ENCODE measurements at regions of chr2 and their contacts with region 1.

Region 1: GRCh38 chr2:27356382-27357181 is at the start of gene GTF3C2:
- DNase-seq: peak; percentile 98
- ATAC-seq: peak; percentile 82
- H3K4me3 ChIP-seq: peak within 1 kb of the TSS; percentile 64 to 90 (median 82)
- H3K4me3 Mint-ChIP-seq: peak within 1 kb of the TSS; percentile 97
- H3K27ac ChIP-seq: peak within 1 kb of the TSS; percentile 86 to 88
- H3K27ac Mint-ChIP-seq: peak within 1 kb of the TSS; percentile 99
- H3K4me1 ChIP-seq: peaks cover 18 to 25% of the 10 kb centered on the region in 2 donors
- H3K4me1 Mint-ChIP-seq: peaks cover 48% of the 10 kb centered on the region
- H3K27me3 ChIP-seq: no peaks in the 10 kb centered on the region
- H3K27me3 Mint-ChIP-seq: no peaks in the 10 kb centered on the region
- CTCF ChIP-seq: no peak
- total RNA-seq, gene GTF3C2: 114 and 121 TPM in 2 replicates

Region 2: DNA sequence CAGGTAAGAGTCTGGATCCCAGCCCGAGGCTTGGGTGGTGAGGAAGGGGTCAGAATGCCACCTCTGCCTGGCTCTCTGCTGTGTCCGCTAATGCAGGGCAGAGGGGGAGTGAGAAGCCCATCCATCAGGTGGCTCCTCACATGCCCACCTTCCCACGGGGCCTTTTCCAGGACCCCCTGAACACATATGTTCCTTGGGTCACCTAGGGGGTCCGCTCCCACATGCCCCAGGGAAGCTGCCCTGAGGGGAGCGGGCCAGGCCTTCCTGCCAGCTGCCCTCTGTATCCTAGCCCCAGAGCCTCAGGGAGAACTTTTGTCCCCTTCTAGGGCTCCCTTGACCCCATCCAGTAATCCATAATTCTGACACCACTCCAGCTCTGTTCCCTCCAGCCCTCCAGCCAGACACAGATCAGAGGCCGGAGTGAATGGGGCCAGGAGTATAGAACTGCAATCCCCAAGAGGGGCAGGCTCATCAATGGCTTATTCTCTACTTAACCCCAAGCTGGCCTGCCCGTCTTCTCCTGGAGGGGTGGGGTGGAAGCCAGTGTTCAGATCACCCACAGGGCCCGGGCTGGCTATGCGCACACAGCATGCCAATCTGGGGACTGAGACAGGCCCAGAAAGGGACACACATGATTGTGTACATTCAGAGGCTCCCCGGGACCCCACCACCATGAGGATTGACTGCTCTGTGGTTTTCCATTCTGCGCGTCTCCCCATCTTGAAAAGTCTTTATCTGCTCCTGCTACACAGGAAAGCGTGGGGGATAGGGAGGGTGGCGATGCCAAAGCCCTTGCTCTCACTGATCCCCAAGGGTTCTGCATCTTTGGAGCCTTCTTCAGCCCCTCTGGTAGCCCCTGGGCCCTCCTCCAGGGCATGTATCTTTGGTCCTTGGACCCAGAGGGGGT is 277.1 kb before region 1 on chr2:
- CTCF ChIA-PET with region 1: no interaction called
- POLR2A ChIA-PET with region 1: no interaction called
- intact Hi-C with region 1: loop called (anchors 1 kb)
- DNase-seq: no peak
- ATAC-seq: no peak
- H3K4me3 ChIP-seq: no peak overlapping the region
- H3K4me3 Mint-ChIP-seq: no peak overlapping the region
- H3K27ac ChIP-seq: no peak overlapping the region
- H3K27ac Mint-ChIP-seq: no peak overlapping the region
- H3K4me1 ChIP-seq: peaks cover 27 to 37% of the 10 kb centered on the region in 2 donors
- H3K4me1 Mint-ChIP-seq: peaks cover 37% of the 10 kb centered on the region
- H3K27me3 ChIP-seq: peaks cover 0 to 11% (median 4%) of the 10 kb centered on the region in 4 experiments
- H3K27me3 Mint-ChIP-seq: no peaks in the 10 kb centered on the region
- CTCF ChIP-seq: no peak

Region 3: GRCh38 chr2:27217217-27218121 is 139.1 kb before region 1 on chr2 and contains the start of gene CAD:
- CTCF ChIA-PET with region 1: no interaction called
- POLR2A ChIA-PET with region 1: interaction called, 4 read pairs
- intact Hi-C with region 1: loop called (anchors 1 kb)
- DNase-seq: peak; percentile 89
- ATAC-seq: peak; percentile 86
- H3K4me3 ChIP-seq: peak within 1 kb of the TSS; percentile 11 to 85 (median 79)
- H3K4me3 Mint-ChIP-seq: peak within 1 kb of the TSS; percentile 98
- H3K27ac ChIP-seq: peak within 1 kb of the TSS; percentile 70 to 74
- H3K27ac Mint-ChIP-seq: peak within 1 kb of the TSS; percentile 87
- H3K4me1 ChIP-seq: peaks cover 28 to 33% of the 10 kb centered on the region in 2 donors
- H3K4me1 Mint-ChIP-seq: peaks cover 44% of the 10 kb centered on the region
- H3K27me3 ChIP-seq: no peaks in the 10 kb centered on the region
- H3K27me3 Mint-ChIP-seq: no peaks in the 10 kb centered on the region
- CTCF ChIP-seq: no peak
- total RNA-seq, gene CAD: 35.6 and 36.0 TPM in 2 replicates

Region 4: DNA sequence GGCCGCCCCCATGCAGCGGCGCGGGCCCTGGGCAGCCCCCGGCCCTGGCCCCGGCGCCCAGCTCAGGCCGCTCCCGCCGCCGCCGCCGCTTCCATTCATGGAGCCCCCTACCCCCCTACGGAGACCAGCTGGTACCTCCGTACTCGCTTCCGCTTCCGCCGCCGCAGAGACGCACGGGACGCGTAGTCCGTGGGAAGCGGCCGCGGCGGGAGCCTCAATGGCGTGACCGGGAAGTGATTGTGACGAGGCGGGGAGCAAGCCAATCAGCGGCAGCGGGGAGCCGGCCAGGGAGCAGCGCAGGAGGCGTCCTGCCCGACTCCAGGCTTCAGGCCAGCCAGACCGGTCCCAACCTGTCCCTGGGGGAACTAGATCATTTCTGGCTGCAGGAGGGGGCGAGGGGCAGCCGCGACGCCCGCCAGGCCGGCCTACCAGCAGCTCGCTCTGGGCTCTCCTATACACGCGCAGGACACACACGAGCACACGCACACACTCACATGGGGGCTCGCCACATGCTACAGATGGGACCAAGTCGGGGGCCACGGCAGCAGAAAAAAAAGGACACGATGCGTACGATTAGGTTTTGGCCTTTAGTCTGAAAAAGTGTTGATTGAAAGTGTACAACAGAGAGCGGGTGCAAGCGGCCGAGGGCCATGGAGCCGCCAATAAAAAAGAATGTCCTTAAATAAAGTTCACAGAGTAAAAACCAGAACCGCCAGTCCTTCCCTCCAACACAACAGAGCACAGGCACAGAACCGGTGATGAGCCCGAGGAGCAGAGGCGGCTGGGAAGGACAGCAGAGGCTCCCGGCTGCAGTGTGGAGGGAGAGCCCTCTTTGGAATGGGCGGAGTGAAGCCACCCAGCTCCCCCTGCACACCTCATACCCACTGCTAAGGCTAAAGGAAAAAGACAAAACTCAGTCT is 24.3 kb after region 1 on chr2 and contains the start of gene ZNF513:
- CTCF ChIA-PET with region 1: no interaction called
- POLR2A ChIA-PET with region 1: interaction called, 5 read pairs
- intact Hi-C with region 1: loop called (anchors 1 kb)
- DNase-seq: peak; percentile 92
- ATAC-seq: peak; percentile 94
- H3K4me3 ChIP-seq: peak within 1 kb of the TSS; percentile 40 to 66 (median 63)
- H3K4me3 Mint-ChIP-seq: peak within 1 kb of the TSS; percentile 94
- H3K27ac ChIP-seq: peak within 1 kb of the TSS; percentile 56 to 94
- H3K27ac Mint-ChIP-seq: peak within 1 kb of the TSS; percentile 96
- H3K4me1 ChIP-seq: peaks cover 16 to 20% of the 10 kb centered on the region in 2 donors
- H3K4me1 Mint-ChIP-seq: peaks cover 30% of the 10 kb centered on the region
- H3K27me3 ChIP-seq: no peaks in the 10 kb centered on the region
- H3K27me3 Mint-ChIP-seq: no peaks in the 10 kb centered on the region
- CTCF ChIP-seq: no peak
- total RNA-seq, gene ZNF513: 29.0 and 31.7 TPM in 2 replicates